ENCODE measurements at regions of chr17 and their contacts with region 1.

Region 1: GRCh38 chr17:19766422-19767270 is 18.5 kb upstream of the ALDH3A1 start:
- DNase-seq: peak; percentile 83

Region 2: DNA sequence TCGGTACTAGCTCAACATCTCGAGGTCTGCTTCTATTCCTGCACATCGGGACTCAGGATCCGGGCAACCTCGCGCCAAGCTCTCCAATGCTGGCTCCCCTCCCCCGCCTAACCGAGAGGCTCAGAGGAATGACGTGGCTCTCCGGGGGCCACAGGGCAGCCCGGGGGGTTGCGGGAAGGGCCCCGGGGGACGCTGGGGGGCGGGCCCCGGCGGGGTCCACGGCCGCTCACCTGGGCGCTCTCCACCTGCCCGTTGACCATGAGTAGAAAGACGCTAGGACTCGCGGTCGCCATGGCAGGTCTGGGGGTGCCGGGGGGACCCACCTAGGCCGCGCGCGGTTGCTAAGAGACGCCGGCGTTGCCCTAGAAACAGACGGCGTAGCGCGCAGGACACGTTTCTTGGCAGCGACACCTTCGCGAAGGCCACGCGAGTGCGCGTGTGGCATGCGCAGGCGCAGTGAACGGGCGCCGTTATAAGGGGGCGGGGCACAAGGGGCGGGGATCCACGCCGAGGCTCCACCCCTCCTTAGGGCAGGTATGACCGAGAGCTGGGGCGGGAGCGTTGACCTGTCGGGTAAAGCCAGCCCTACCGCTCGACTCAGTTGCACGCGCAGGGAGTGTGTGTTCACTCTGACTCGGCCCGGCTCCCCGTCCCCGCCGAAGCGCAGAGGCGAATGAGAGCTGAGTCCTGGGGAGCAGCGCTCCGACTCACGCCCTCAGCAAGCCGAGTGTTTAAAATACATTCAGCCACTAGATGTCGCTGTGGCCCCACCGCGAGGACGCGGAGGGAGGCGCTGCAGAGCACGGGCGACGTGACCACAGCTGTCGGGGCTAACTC is 404.2 kb before region 1 on chr17 and contains the start of gene B9D1:
- CTCF ChIA-PET with region 1: interaction called, 28 read pairs
- POLR2A ChIA-PET with region 1: no interaction called
- DNase-seq: peak; percentile 97

Region 3: GRCh38 chr17:19513897-19514488 is 252.7 kb before region 1 on chr17:
- CTCF ChIA-PET with region 1: interaction called, 22 read pairs
- POLR2A ChIA-PET with region 1: no interaction called
- DNase-seq: peak; percentile 63

Region 4: GRCh38 chr17:19744922-19745757 is 21.5 kb before region 1 on chr17:
- CTCF ChIA-PET with region 1: interaction called, 16 read pairs
- POLR2A ChIA-PET with region 1: interaction called, 46 read pairs
- DNase-seq: peak; percentile 91

Region 5: GRCh38 chr17:19753049-19753444 is 13.6 kb before region 1 on chr17:
- CTCF ChIA-PET with region 1: interaction called, 22 read pairs
- POLR2A ChIA-PET with region 1: interaction called, 4 read pairs
- DNase-seq: no peak

Region 6: DNA sequence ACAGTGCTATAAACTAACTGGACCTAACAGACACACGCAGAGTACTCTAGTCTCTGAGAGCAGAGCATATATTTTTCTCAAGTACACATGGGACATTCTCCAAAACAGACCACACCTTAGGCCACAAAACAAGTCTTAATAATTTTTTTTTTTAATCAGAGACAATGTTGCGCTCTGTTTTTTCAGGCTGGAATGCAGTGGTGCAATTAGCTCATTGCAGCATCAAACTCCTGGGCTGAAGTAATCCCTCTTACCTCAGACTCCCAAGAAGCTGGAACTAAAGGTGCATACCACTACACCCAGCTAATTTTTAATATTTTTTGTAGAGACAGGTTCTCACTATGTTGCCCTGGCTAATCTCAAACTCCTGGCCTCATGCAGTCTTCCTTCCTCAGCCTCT is 63.4 kb after region 1 on chr17:
- CTCF ChIA-PET with region 1: no interaction called
- POLR2A ChIA-PET with region 1: no interaction called
- DNase-seq: no peak